CD8-positive, alpha-beta T cell (primary cell): ENCODE measurements at regions of chr15 and their contacts with region 1.

Region 1: GRCh38 chr15:30991255-30992072 is at the start of gene MTMR10:
- DNase-seq: peak; percentile 62 to 86 (median 69)
- ATAC-seq: peak; percentile 93
- H3K4me3 ChIP-seq: peak within 1 kb of the TSS; percentile 71 to 93
- H3K4me3 Mint-ChIP-seq: peak within 1 kb of the TSS; percentile 94
- H3K27ac ChIP-seq: peak within 1 kb of the TSS; percentile 75 to 77
- H3K27ac Mint-ChIP-seq: peak within 1 kb of the TSS; percentile 95
- H3K4me1 ChIP-seq: peaks cover 26% of the 10 kb centered on the region
- H3K4me1 Mint-ChIP-seq: peaks cover 34% of the 10 kb centered on the region
- H3K27me3 ChIP-seq: no peaks in the 10 kb centered on the region
- H3K27me3 Mint-ChIP-seq: no peaks in the 10 kb centered on the region
- CTCF ChIP-seq: no peak
- total RNA-seq, gene MTMR10: 54.7 to 56.4 TPM

Region 2: GRCh38 chr15:30903497-30904201 is 87.8 kb before region 1 on chr15 and contains the start of gene FAN1:
- CTCF ChIA-PET with region 1: no interaction called
- POLR2A ChIA-PET with region 1: no interaction called
- intact Hi-C with region 1: loop called (anchors 1 to 5 kb)
- DNase-seq: peak; percentile 41 to 84 (median 71)
- ATAC-seq: peak; percentile 87
- H3K4me3 ChIP-seq: peak within 1 kb of the TSS; percentile 66 to 79
- H3K4me3 Mint-ChIP-seq: peak within 1 kb of the TSS; percentile 97
- H3K27ac ChIP-seq: peak within 1 kb of the TSS; percentile 33 to 37
- H3K27ac Mint-ChIP-seq: peak within 1 kb of the TSS; percentile 79
- H3K4me1 ChIP-seq: peaks cover 6% of the 10 kb centered on the region
- H3K4me1 Mint-ChIP-seq: peaks cover 30% of the 10 kb centered on the region
- H3K27me3 ChIP-seq: no peaks in the 10 kb centered on the region
- H3K27me3 Mint-ChIP-seq: no peaks in the 10 kb centered on the region
- CTCF ChIP-seq: no peak
- total RNA-seq, gene FAN1: 6.7 to 7.6 TPM

Region 3: GRCh38 chr15:31013538-31014228 is 22.2 kb after region 1 on chr15:
- CTCF ChIA-PET with region 1: interaction called, 4 read pairs
- POLR2A ChIA-PET with region 1: interaction called, 15 read pairs
- intact Hi-C with region 1: no loop called
- DNase-seq: peak in 1 of 9 experiments; percentile 47
- ATAC-seq: peak; percentile 65
- H3K4me3 ChIP-seq: no peak overlapping the region
- H3K4me3 Mint-ChIP-seq: peak overlapping the region; percentile 27
- H3K27ac ChIP-seq: peak overlapping the region; percentile 5 to 47
- H3K27ac Mint-ChIP-seq: peak overlapping the region; percentile 88
- H3K4me1 ChIP-seq: peaks cover 16% of the 10 kb centered on the region
- H3K4me1 Mint-ChIP-seq: peaks cover 18% of the 10 kb centered on the region
- H3K27me3 ChIP-seq: no peaks in the 10 kb centered on the region
- H3K27me3 Mint-ChIP-seq: no peaks in the 10 kb centered on the region
- CTCF ChIP-seq: no peak

Region 4: GRCh38 chr15:31870328-31871165 is 879.1 kb after region 1 on chr15:
- CTCF ChIA-PET with region 1: no interaction called
- POLR2A ChIA-PET with region 1: no interaction called
- intact Hi-C with region 1: loop called in 1 of 2 experiments (anchors 10 kb)
- DNase-seq: peak; percentile 66 to 93 (median 85)
- ATAC-seq: peak; percentile 87
- H3K4me3 ChIP-seq: peak within 1 kb of the TSS; percentile 71 to 83
- H3K4me3 Mint-ChIP-seq: peak within 1 kb of the TSS; percentile 87
- H3K27ac ChIP-seq: peak within 1 kb of the TSS; percentile 52 to 64
- H3K27ac Mint-ChIP-seq: peak within 1 kb of the TSS; percentile 85
- H3K4me1 ChIP-seq: peaks cover 10% of the 10 kb centered on the region
- H3K4me1 Mint-ChIP-seq: peaks cover 13% of the 10 kb centered on the region
- H3K27me3 ChIP-seq: no peaks in the 10 kb centered on the region
- H3K27me3 Mint-ChIP-seq: peaks cover 10% of the 10 kb centered on the region
- CTCF ChIP-seq: no peak